ENCODE measurements at regions of chr5 and their contacts with region 1.

Region 1: GRCh38 chr5:180315762-180316212 is 23.9 kb upstream of the MAPK9 start:
- DNase-seq: peak; percentile 70 to 76
- H3K4me3 ChIP-seq: no peak overlapping the region
- H3K27ac ChIP-seq: no peak overlapping the region
- H3K4me1 ChIP-seq: peaks cover 0 to 5% of the 10 kb centered on the region in 2 donors
- H3K27me3 ChIP-seq: no peaks in the 10 kb centered on the region
- CTCF ChIP-seq: peak; percentile 76 to 97 (median 87)
- POLR2A ChIP-seq: no peak

Region 2: GRCh38 chr5:179967489-179967888 is 348.3 kb before region 1 on chr5:
- intact Hi-C with region 1: no loop called
- DNase-seq: no peak
- H3K4me3 ChIP-seq: no peak overlapping the region
- H3K27ac ChIP-seq: no peak overlapping the region
- H3K4me1 ChIP-seq: no peaks in the 10 kb centered on the region
- H3K27me3 ChIP-seq: no peaks in the 10 kb centered on the region
- CTCF ChIP-seq: no peak
- POLR2A ChIP-seq: no peak

Region 3: DNA sequence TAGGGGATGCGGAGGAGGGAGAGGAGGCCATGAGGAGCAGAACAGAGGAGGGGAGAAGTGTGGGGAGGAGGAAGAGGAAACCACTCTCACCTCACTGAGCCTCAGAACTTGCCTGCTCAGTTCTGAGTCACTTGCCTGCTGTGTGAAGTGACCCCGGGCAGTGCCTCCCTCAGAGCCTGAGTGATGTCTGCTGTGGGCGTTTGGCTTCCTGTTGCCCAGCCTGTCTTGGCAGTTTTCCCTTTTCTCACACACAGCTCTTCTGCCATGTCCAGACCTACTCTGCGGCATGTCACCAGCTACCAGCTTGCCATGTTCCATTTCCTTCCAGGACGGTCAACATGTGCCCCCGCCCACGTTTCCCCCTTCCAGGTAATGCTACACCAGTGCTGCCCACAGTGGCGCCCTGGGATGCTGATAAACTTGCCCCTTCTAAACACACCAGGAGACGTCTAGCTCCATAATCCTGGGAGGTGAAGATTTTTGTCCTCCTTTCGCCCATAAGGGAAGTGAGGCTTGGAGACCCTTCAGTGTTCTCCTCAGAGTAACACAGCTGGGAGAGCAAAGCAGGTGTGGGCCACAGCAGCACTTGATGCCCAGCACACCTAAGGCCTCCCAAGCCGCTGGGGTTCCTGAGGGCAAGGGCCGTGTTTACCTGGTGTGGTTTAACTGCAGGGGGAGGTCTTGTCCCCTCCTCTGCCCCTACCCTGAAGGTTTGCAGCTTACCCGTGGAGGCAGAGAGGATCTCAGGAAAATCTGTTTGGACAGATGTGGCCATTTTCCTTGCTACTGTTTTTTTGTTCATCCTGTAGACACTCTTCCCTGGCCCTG is 180.4 kb before region 1 on chr5:
- intact Hi-C with region 1: loop called (anchors 10 kb)
- DNase-seq: no peak
- H3K4me3 ChIP-seq: no peak overlapping the region
- H3K27ac ChIP-seq: no peak overlapping the region
- H3K4me1 ChIP-seq: peaks cover 6 to 7% of the 10 kb centered on the region in 2 donors
- H3K27me3 ChIP-seq: no peaks in the 10 kb centered on the region
- CTCF ChIP-seq: no peak
- POLR2A ChIP-seq: no peak